ENCODE measurements at regions of chr12 and their contacts with region 1.

Region 1: GRCh38 chr12:85424581-85425348 is 144.7 kb downstream of the ALX1 start:
- DNase-seq: peak in 1 of 9 experiments; percentile 2
- ATAC-seq: no peak
- H3K4me3 ChIP-seq: no peak overlapping the region
- H3K4me3 Mint-ChIP-seq: no peak overlapping the region
- H3K27ac ChIP-seq: no peak overlapping the region
- H3K27ac Mint-ChIP-seq: no peak overlapping the region
- H3K4me1 ChIP-seq: no peaks in the 10 kb centered on the region
- H3K4me1 Mint-ChIP-seq: no peaks in the 10 kb centered on the region
- H3K27me3 ChIP-seq: no peaks in the 10 kb centered on the region
- H3K27me3 Mint-ChIP-seq: no peaks in the 10 kb centered on the region
- CTCF ChIP-seq: no peak

Region 2: GRCh38 chr12:85374981-85375380 is 49.8 kb before region 1 on chr12:
- CTCF ChIA-PET with region 1: no interaction called
- POLR2A ChIA-PET with region 1: no interaction called
- intact Hi-C with region 1: loop called in 1 of 2 experiments (anchors 1 kb)
- DNase-seq: no peak
- ATAC-seq: no peak
- H3K4me3 ChIP-seq: no peak overlapping the region
- H3K4me3 Mint-ChIP-seq: no peak overlapping the region
- H3K27ac ChIP-seq: no peak overlapping the region
- H3K27ac Mint-ChIP-seq: no peak overlapping the region
- H3K4me1 ChIP-seq: no peaks in the 10 kb centered on the region
- H3K4me1 Mint-ChIP-seq: no peaks in the 10 kb centered on the region
- H3K27me3 ChIP-seq: no peaks in the 10 kb centered on the region
- H3K27me3 Mint-ChIP-seq: no peaks in the 10 kb centered on the region
- CTCF ChIP-seq: no peak

Region 3: GRCh38 chr12:85394834-85395233 is 29.9 kb before region 1 on chr12:
- CTCF ChIA-PET with region 1: no interaction called
- POLR2A ChIA-PET with region 1: no interaction called
- intact Hi-C with region 1: no loop called
- DNase-seq: no peak
- ATAC-seq: no peak
- H3K4me3 ChIP-seq: no peak overlapping the region
- H3K4me3 Mint-ChIP-seq: no peak overlapping the region
- H3K27ac ChIP-seq: no peak overlapping the region
- H3K27ac Mint-ChIP-seq: no peak overlapping the region
- H3K4me1 ChIP-seq: no peaks in the 10 kb centered on the region
- H3K4me1 Mint-ChIP-seq: no peaks in the 10 kb centered on the region
- H3K27me3 ChIP-seq: no peaks in the 10 kb centered on the region
- H3K27me3 Mint-ChIP-seq: no peaks in the 10 kb centered on the region
- CTCF ChIP-seq: no peak

Region 4: DNA sequence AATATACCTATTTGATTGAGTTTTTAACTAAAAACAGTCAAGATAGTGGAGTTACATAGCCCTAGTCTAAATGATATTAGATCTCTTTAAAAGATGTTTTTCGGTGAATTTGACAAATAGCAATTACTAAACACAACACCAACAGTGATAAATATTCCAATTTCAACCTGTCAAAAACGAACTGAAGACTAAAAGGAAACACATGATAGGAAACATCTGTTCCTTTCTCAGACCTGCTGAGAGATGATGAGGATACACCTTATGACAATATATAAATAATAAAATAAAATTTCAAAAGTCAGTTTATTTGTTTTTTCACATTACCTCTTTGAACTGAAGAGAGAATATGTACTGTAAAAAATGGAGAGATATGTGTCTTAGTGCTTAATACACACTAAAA is 178.8 kb after region 1 on chr12:
- CTCF ChIA-PET with region 1: no interaction called
- POLR2A ChIA-PET with region 1: no interaction called
- intact Hi-C with region 1: no loop called
- DNase-seq: no peak
- ATAC-seq: no peak
- H3K4me3 ChIP-seq: no peak overlapping the region
- H3K4me3 Mint-ChIP-seq: no peak overlapping the region
- H3K27ac ChIP-seq: no peak overlapping the region
- H3K27ac Mint-ChIP-seq: no peak overlapping the region
- H3K4me1 ChIP-seq: no peaks in the 10 kb centered on the region
- H3K4me1 Mint-ChIP-seq: no peaks in the 10 kb centered on the region
- H3K27me3 ChIP-seq: no peaks in the 10 kb centered on the region
- H3K27me3 Mint-ChIP-seq: no peaks in the 10 kb centered on the region
- CTCF ChIP-seq: no peak